Activated CD4-positive, alpha-beta T cell treated with anti-CD3 and anti-CD28 coated beads for 36 hours (primary cell): ENCODE measurements at regions of chr15 and their contacts with region 1.

Region 1: DNA sequence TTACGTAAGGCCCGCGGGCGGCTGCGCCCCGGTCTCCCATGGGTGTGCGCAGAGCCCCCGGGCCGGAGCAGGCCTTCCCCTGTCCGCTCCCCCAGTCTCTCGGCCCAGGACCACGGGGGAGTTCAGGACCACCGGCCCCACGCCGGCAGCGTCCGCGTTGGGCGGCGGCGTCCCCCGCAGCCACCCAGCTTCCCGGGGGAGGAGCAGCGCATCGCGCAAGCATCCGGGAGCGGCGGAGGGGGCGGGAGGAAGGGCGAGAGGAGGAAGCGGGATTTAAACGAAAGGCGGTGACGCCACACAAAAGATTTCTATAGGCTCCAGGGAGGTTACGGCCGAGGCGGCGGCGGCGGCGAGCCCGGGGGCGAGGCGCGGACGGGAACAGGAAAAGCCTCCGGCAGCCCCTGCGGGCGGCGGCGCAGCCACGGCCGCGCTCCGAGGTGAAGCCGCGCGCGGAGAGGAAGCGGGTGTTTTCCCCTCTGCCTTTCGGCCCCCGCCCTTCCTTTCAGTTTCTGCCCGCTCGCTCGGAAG is at the start of gene TLNRD1:
- DNase-seq: peak; percentile 90
- ATAC-seq: peak; percentile 70
- H3K4me3 Mint-ChIP-seq: peak within 1 kb of the TSS; percentile 92
- H3K27ac Mint-ChIP-seq: peak within 1 kb of the TSS; percentile 92
- H3K4me1 Mint-ChIP-seq: peaks cover 45% of the 10 kb centered on the region
- H3K27me3 Mint-ChIP-seq: no peaks in the 10 kb centered on the region
- total RNA-seq, gene TLNRD1: 11.2 to 16.9 TPM

Region 2: GRCh38 chr15:80072285-80072994 is 928.2 kb before region 1 on chr15:
- CTCF ChIA-PET with region 1: no interaction called
- POLR2A ChIA-PET with region 1: no interaction called
- intact Hi-C with region 1: loop called in 1 of 2 experiments (anchors 5 kb)
- DNase-seq: no peak
- ATAC-seq: peak; percentile 98
- H3K4me3 Mint-ChIP-seq: peak overlapping the region; percentile 80
- H3K27ac Mint-ChIP-seq: peak overlapping the region; percentile 40
- H3K4me1 Mint-ChIP-seq: peaks cover 59% of the 10 kb centered on the region
- H3K27me3 Mint-ChIP-seq: no peaks in the 10 kb centered on the region

Region 3: DNA sequence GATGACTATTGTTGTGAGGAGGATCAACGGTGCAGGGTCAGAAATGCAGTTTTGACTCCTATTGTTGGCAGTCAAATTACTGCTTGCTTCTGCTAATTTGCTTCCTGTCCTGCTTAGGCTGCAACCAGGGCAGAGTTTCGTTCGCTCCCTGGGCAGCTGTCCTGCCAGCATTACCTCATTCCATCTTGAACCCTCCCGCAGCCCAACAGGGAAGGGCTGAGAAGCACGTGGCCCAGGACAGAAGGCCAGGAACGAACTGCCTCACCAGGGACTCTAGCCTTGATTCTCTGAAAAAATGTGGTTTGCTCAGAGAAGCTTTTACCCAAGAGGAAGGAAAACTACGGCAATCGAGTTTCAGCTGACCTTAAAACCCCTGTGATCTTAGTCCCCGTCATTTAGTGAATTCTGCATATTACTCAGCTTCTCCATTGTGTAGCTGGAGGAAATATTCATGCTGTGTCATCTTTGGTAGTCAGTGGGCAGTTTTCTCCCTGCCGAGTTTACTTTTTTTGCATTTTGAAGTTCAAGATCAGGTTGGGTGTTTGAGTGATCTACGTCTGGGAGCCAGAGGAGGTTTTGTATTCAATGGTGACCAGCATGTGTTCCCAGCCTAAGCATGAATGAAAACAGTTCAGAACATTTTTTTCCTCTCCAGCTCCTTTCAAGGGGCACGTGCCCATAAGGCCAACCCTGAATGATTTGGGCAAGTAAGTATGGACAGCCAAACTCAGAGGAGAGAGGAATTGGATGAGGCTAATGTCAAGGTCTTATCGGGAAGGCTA is 23.0 kb after region 1 on chr15:
- CTCF ChIA-PET with region 1: no interaction called
- POLR2A ChIA-PET with region 1: no interaction called
- intact Hi-C with region 1: loop called (anchors 1 kb)
- DNase-seq: peak; percentile 45
- ATAC-seq: peak; percentile 85
- H3K4me3 Mint-ChIP-seq: peak overlapping the region; percentile 32
- H3K27ac Mint-ChIP-seq: peak overlapping the region; percentile 87
- H3K4me1 Mint-ChIP-seq: peaks cover 36% of the 10 kb centered on the region
- H3K27me3 Mint-ChIP-seq: peaks cover 2% of the 10 kb centered on the region

Region 4: DNA sequence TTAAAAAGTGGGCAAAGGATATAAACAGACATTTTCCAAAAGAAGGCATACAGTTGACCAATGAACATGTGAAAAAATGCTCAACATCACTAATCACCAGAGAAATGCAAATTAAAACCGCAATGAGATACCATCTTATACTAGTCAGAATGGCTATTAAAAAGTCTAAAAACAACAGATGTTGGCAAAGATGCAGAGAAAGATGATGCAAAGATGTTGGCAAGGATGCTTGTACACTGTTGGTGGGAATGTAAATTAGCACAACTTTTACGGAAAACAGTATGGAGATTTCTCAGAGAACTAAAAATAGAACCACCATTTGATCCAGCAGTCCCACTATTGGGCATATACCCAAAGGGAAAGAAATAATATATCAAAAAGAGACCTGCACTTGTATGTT is 53.5 kb after region 1 on chr15:
- CTCF ChIA-PET with region 1: no interaction called
- POLR2A ChIA-PET with region 1: no interaction called
- intact Hi-C with region 1: no loop called
- DNase-seq: no peak
- ATAC-seq: no peak
- H3K4me3 Mint-ChIP-seq: no peak overlapping the region
- H3K27ac Mint-ChIP-seq: no peak overlapping the region
- H3K4me1 Mint-ChIP-seq: no peaks in the 10 kb centered on the region
- H3K27me3 Mint-ChIP-seq: no peaks in the 10 kb centered on the region

Region 5: GRCh38 chr15:81666839-81667238 is 666.2 kb after region 1 on chr15:
- CTCF ChIA-PET with region 1: no interaction called
- POLR2A ChIA-PET with region 1: no interaction called
- intact Hi-C with region 1: no loop called
- DNase-seq: no peak
- ATAC-seq: no peak
- H3K4me3 Mint-ChIP-seq: no peak overlapping the region
- H3K27ac Mint-ChIP-seq: no peak overlapping the region
- H3K4me1 Mint-ChIP-seq: no peaks in the 10 kb centered on the region
- H3K27me3 Mint-ChIP-seq: peaks cover 3% of the 10 kb centered on the region